Naive thymus-derived CD4-positive, alpha-beta T cell (primary cell): ENCODE measurements at regions of chr7 and their contacts with region 1.

Region 1: DNA sequence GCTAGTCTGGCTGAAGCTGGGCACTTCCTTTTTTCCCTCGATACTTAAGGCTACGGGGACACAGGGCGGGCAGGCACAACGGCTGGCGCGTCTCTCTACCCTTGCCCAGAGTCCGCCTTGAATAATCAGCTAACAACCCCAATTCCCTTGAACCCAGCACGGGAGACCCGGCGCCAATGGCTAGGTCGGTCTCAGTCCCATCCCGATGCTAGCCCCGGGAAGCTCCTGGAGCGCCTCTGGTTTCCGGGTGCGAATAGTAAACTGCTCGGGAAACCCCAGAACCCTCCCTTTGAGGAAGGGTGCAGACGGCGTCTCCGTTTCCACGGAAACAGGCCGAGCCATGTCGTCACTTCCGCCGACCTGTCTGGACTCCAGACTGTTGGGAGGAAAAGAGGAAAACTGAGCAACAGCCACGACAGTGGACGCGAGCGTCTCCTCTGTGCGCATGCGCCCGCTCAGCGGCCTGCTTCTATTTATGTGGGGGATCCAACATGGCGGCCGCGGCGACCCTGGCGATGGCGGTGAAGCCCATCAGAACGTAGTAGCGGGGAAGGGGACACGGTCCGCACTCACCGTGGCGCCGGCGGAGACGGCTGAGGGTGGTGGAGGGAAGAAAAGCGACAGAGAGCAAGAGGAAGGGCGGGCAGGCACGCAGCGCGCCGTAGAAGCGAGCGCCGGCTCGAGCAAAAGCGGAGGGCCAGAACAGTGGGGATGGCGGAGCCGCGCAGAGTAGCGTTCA is at the start of gene UBN2:
- DNase-seq: peak; percentile 68 to 91 (median 76)
- ATAC-seq: peak; percentile 86
- H3K4me3 ChIP-seq: peak within 1 kb of the TSS; percentile 77
- H3K4me3 Mint-ChIP-seq: peak within 1 kb of the TSS; percentile 96 to 100 (median 99)
- H3K27ac ChIP-seq: peak within 1 kb of the TSS; percentile 85
- H3K27ac Mint-ChIP-seq: peak within 1 kb of the TSS; percentile 93 to 98 (median 96)
- H3K4me1 ChIP-seq: no peaks in the 10 kb centered on the region
- H3K4me1 Mint-ChIP-seq: peaks cover 24 to 33% (median 29%) of the 10 kb centered on the region in 7 donors
- H3K27me3 ChIP-seq: no peaks in the 10 kb centered on the region
- H3K27me3 Mint-ChIP-seq: peaks cover 0 to 36% (median 5%) of the 10 kb centered on the region in 5 donors
- total RNA-seq, gene UBN2: 16.2 to 31.2 (median 20.5) TPM

Region 2: DNA sequence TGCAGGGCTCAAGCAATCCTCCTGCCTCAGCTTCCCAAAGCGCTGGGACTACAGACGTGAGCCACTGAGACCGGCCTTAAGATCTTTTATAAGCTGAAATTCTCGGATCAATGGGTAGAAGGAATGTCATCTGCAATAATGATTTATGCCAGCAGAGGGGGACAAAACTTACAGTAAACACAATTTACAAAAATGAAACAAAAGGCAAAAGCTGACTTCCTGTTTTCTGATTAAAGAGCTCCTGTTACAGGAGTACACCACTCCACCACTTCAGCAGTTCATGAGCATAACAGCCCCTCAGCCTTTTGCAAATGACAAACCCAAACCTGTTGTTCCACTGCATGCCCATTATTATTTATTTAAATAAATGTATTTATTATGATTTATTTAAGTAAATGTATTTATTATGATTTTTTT is 344.4 kb before region 1 on chr7:
- CTCF ChIA-PET with region 1: no interaction called
- POLR2A ChIA-PET with region 1: no interaction called
- intact Hi-C with region 1: loop called in 1 of 2 experiments (anchors 1 kb)
- DNase-seq: peak in 7 of 9 donors; percentile 63 to 82 (median 78)
- ATAC-seq: peak; percentile 91
- H3K4me3 ChIP-seq: no peak overlapping the region
- H3K4me3 Mint-ChIP-seq: peak overlapping the region in 7 of 10 donors; percentile 41 to 67 (median 60)
- H3K27ac ChIP-seq: no peak overlapping the region
- H3K27ac Mint-ChIP-seq: peak overlapping the region; percentile 9 to 88 (median 61)
- H3K4me1 ChIP-seq: peaks cover 3 to 4% of the 10 kb centered on the region in 2 donors
- H3K4me1 Mint-ChIP-seq: peaks cover 3 to 32% (median 23%) of the 10 kb centered on the region in 7 donors
- H3K27me3 ChIP-seq: no peaks in the 10 kb centered on the region
- H3K27me3 Mint-ChIP-seq: peaks cover 0 to 13% (median 0%) of the 10 kb centered on the region in 5 donors

Region 3: DNA sequence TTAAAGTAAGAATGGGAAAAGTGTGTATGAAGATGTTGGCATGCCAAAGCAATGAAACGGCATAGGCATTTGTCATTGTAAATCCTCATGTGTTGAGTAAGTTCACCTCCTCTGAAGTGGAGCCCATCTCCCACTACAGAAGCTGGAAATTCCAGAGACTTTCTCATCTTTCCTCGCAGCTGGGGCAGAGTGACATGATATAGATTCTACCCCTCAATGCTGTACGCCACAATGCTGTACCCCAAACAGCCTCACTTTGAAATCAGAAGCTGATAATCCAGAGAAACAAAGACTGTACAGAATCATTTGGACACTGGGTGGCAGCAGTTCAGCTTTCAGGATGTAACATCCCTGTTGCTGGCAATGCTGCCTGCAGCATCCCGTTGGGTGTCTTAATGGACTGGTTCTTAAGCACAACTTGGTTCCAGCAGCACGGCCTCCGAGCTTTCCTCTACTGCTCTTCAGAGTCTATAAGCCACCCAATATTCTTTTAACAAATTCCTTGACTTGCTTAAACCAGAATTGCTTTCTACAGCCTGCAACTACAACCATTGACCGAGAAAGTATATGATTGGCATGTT is 213.9 kb before region 1 on chr7:
- CTCF ChIA-PET with region 1: no interaction called
- POLR2A ChIA-PET with region 1: no interaction called
- intact Hi-C with region 1: loop called in 1 of 2 experiments (anchors 2 kb)
- DNase-seq: peak; percentile 17 to 76 (median 52)
- ATAC-seq: peak; percentile 94
- H3K4me3 ChIP-seq: no peak overlapping the region
- H3K4me3 Mint-ChIP-seq: no peak overlapping the region
- H3K27ac ChIP-seq: no peak overlapping the region
- H3K27ac Mint-ChIP-seq: peak overlapping the region in 1 of 9 donors; percentile 52
- H3K4me1 ChIP-seq: no peaks in the 10 kb centered on the region
- H3K4me1 Mint-ChIP-seq: peaks cover 0 to 10% (median 6%) of the 10 kb centered on the region in 7 donors
- H3K27me3 ChIP-seq: no peaks in the 10 kb centered on the region
- H3K27me3 Mint-ChIP-seq: peaks cover 0 to 16% (median 5%) of the 10 kb centered on the region in 5 donors

Region 4: GRCh38 chr7:139095194-139095659 is 135.7 kb before region 1 on chr7:
- CTCF ChIA-PET with region 1: interaction called, 3 read pairs
- POLR2A ChIA-PET with region 1: no interaction called
- intact Hi-C with region 1: loop called in 1 of 2 experiments (anchors 1 kb)
- DNase-seq: peak; percentile 45 to 95 (median 93)
- ATAC-seq: peak; percentile 96
- H3K4me3 ChIP-seq: peak overlapping the region; percentile 84
- H3K4me3 Mint-ChIP-seq: peak overlapping the region; percentile 81 to 98 (median 88)
- H3K27ac ChIP-seq: peak overlapping the region; percentile 75
- H3K27ac Mint-ChIP-seq: peak overlapping the region; percentile 89 to 97 (median 94)
- H3K4me1 ChIP-seq: peaks cover 53 to 75% of the 10 kb centered on the region in 2 donors
- H3K4me1 Mint-ChIP-seq: peaks cover 60 to 100% (median 87%) of the 10 kb centered on the region in 7 donors
- H3K27me3 ChIP-seq: no peaks in the 10 kb centered on the region
- H3K27me3 Mint-ChIP-seq: peaks cover 0 to 3% (median 0%) of the 10 kb centered on the region in 5 donors

Region 5: DNA sequence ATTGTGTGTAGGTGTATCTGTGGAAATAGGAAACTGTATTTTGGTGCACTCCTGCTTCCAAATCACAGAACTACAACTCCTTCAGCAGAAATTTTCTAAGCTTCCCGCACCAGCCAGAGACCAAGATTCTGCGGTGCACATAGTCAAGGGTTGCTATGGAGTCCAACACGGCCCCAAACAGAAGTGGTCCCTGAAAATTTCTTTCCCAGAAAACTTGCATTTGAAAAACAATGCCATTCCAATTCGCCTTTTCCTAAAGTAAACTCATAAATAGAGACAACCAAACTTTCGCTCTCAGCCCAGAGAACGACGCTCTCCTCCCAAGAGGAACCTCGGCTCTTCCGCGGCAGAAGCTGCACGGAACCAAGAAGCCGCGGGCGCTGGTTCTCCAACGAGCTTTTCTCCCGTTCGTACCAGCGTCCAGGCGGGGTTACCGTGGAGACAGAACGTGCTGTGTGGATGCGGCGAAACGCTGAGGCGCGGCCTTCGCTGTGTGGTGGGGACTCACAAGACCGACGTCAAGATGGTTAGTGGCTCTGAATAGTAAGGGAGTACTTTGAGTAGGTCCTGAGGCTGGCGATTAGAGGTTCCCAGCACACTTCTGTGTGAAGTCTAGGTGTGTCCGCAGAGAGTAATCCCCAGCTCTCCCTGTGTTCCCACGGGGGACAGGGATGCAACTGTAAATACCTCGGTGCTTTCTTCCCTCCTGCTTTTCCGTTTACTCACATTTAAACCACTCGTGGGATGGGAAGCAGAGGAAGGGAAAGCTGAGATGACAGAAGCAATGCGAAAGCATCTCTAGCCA is 97.4 kb before region 1 on chr7:
- CTCF ChIA-PET with region 1: no interaction called
- POLR2A ChIA-PET with region 1: interaction called, 5 read pairs
- intact Hi-C with region 1: loop called (anchors 1 kb)
- DNase-seq: peak; percentile 68 to 86 (median 83)
- ATAC-seq: peak; percentile 98
- H3K4me3 ChIP-seq: peak overlapping the region; percentile 86
- H3K4me3 Mint-ChIP-seq: peak overlapping the region; percentile 85 to 96 (median 90)
- H3K27ac ChIP-seq: peak overlapping the region; percentile 72
- H3K27ac Mint-ChIP-seq: peak overlapping the region; percentile 76 to 95 (median 85)
- H3K4me1 ChIP-seq: peaks cover 0 to 10% of the 10 kb centered on the region in 2 donors
- H3K4me1 Mint-ChIP-seq: peaks cover 11 to 33% (median 16%) of the 10 kb centered on the region in 7 donors
- H3K27me3 ChIP-seq: no peaks in the 10 kb centered on the region
- H3K27me3 Mint-ChIP-seq: peaks cover 0 to 5% (median 0%) of the 10 kb centered on the region in 5 donors

Region 6: GRCh38 chr7:139203992-139204391 is 27.0 kb before region 1 on chr7:
- CTCF ChIA-PET with region 1: no interaction called
- POLR2A ChIA-PET with region 1: no interaction called
- intact Hi-C with region 1: no loop called
- DNase-seq: no peak
- ATAC-seq: no peak
- H3K4me3 ChIP-seq: no peak overlapping the region
- H3K4me3 Mint-ChIP-seq: no peak overlapping the region
- H3K27ac ChIP-seq: no peak overlapping the region
- H3K27ac Mint-ChIP-seq: no peak overlapping the region
- H3K4me1 ChIP-seq: no peaks in the 10 kb centered on the region
- H3K4me1 Mint-ChIP-seq: no peaks in the 10 kb centered on the region
- H3K27me3 ChIP-seq: no peaks in the 10 kb centered on the region
- H3K27me3 Mint-ChIP-seq: peaks cover 0 to 16% (median 9%) of the 10 kb centered on the region in 5 donors

Region 7: GRCh38 chr7:139777948-139778841 is 547.3 kb after region 1 on chr7 and contains the start of gene HIPK2:
- CTCF ChIA-PET with region 1: no interaction called
- POLR2A ChIA-PET with region 1: no interaction called
- intact Hi-C with region 1: loop called in 1 of 2 experiments (anchors 10 kb)
- DNase-seq: peak; percentile 54 to 75 (median 67)
- ATAC-seq: peak; percentile 79
- H3K4me3 ChIP-seq: peak within 1 kb of the TSS; percentile 85
- H3K4me3 Mint-ChIP-seq: peak within 1 kb of the TSS; percentile 94 to 100 (median 98)
- H3K27ac ChIP-seq: peak within 1 kb of the TSS; percentile 89
- H3K27ac Mint-ChIP-seq: peak within 1 kb of the TSS; percentile 95 to 98 (median 97)
- H3K4me1 ChIP-seq: peaks cover 4 to 26% of the 10 kb centered on the region in 2 donors
- H3K4me1 Mint-ChIP-seq: peaks cover 41 to 53% (median 49%) of the 10 kb centered on the region in 7 donors
- H3K27me3 ChIP-seq: no peaks in the 10 kb centered on the region
- H3K27me3 Mint-ChIP-seq: peaks cover 0 to 24% (median 5%) of the 10 kb centered on the region in 5 donors
- total RNA-seq, gene HIPK2: 27.3 to 44.0 (median 37.3) TPM

Region 8: DNA sequence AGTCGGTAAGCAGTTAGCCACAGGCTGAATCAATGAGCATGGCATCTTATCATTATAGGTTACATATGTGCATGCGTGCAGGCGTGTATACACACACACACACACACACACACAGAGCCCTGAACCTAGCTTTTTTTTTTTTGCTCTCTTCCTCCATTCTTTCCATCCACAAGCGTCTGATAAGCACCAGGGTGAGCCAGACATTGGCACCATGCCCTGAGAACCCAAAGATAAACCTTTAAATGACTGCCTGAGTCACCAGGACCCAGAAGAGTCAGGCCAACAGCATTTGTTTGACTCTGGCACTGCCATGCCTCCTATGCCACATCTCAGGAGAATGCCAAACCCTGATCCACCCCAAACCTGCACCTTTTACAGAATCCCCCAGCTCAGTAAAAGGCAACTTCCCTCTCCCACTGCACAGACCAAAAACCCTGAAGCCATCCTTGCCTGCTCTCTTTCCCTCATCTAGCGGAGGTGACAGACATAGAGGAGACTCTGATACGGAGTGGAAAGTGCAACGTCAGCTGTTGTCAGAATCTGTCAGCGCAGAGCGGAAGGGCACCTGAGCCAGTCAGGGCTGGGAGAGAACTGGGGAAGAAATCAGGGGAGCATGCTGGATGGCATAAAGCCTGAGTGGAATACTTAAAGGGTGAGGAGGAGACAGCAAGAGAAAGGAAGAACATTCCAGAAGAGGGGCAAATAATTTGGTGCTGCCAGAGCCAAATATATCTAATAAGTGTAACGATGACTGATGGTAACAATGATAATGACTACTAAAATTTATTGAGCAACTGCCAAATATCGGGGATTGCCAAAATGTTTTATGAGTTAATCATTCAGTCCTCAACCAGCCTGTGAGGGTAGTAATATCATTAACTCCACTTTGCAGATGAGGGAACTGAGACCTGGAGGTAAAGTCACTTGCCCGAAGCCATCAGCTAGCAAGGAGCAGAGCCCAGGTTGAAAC is 828.6 kb after region 1 on chr7:
- CTCF ChIA-PET with region 1: no interaction called
- POLR2A ChIA-PET with region 1: no interaction called
- intact Hi-C with region 1: no loop called
- DNase-seq: peak in 3 of 9 donors; percentile 20 to 45 (median 25)
- ATAC-seq: no peak
- H3K4me3 ChIP-seq: no peak overlapping the region
- H3K4me3 Mint-ChIP-seq: peak overlapping the region; percentile 67 to 94 (median 89)
- H3K27ac ChIP-seq: no peak overlapping the region
- H3K27ac Mint-ChIP-seq: peak overlapping the region; percentile 59 to 94 (median 86)
- H3K4me1 ChIP-seq: peaks cover 36 to 40% of the 10 kb centered on the region in 2 donors
- H3K4me1 Mint-ChIP-seq: peaks cover 44 to 82% (median 69%) of the 10 kb centered on the region in 7 donors
- H3K27me3 ChIP-seq: no peaks in the 10 kb centered on the region
- H3K27me3 Mint-ChIP-seq: no peaks in the 10 kb centered on the region